CD8-positive, alpha-beta memory T cell (primary cell): ENCODE measurements at regions of chr10 and their contacts with region 1.

Region 1: GRCh38 chr10:103350501-103351260 is at the start of gene PCGF6:
- DNase-seq: peak; percentile 58 to 75 (median 66)
- H3K4me3 ChIP-seq: peak within 1 kb of the TSS; percentile 60
- H3K4me3 Mint-ChIP-seq: peak within 1 kb of the TSS; percentile 89 to 99 (median 92)
- H3K27ac ChIP-seq: peak within 1 kb of the TSS; percentile 64
- H3K27ac Mint-ChIP-seq: peak within 1 kb of the TSS; percentile 15 to 94 (median 88)
- H3K4me1 ChIP-seq: peaks cover 10% of the 10 kb centered on the region
- H3K4me1 Mint-ChIP-seq: peaks cover 8 to 22% (median 13%) of the 10 kb centered on the region in 3 donors
- H3K27me3 ChIP-seq: no peaks in the 10 kb centered on the region
- H3K27me3 Mint-ChIP-seq: no peaks in the 10 kb centered on the region
- total RNA-seq, gene PCGF6: 17.6 to 17.7 TPM

Region 2: GRCh38 chr10:102796407-102797176 is 554.1 kb before region 1 on chr10:
- CTCF ChIA-PET with region 1: no interaction called
- POLR2A ChIA-PET with region 1: no interaction called
- DNase-seq: peak in 4 of 5 donors; percentile 7 to 56 (median 20)
- H3K4me3 ChIP-seq: no peak overlapping the region
- H3K4me3 Mint-ChIP-seq: peak overlapping the region in 4 of 7 donors; percentile 8 to 48 (median 26)
- H3K27ac ChIP-seq: no peak overlapping the region
- H3K27ac Mint-ChIP-seq: peak overlapping the region in 7 of 8 donors; percentile 15 to 60 (median 29)
- H3K4me1 ChIP-seq: peaks cover 21% of the 10 kb centered on the region
- H3K4me1 Mint-ChIP-seq: peaks cover 38 to 64% (median 43%) of the 10 kb centered on the region in 3 donors
- H3K27me3 ChIP-seq: no peaks in the 10 kb centered on the region
- H3K27me3 Mint-ChIP-seq: no peaks in the 10 kb centered on the region

Region 3: DNA sequence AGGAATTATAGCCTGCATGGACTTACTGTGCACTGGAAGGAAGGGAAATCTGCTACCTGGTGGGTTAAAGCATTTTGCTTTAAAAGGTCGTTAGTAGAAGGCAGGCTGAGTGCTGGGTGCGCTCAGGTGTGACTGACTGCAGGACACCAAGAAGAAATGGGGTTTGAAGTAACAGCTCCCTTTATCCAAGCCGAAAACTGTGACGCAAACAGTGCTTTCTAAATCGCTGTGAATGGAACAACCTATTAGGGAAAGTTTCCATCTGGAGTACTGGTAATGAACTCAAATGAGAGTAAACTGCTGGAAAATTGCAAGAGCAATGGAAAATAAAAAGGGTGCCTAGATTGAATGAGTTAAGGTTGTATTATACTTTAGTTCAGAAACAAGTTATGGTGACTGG is 337.3 kb before region 1 on chr10:
- CTCF ChIA-PET with region 1: no interaction called
- POLR2A ChIA-PET with region 1: no interaction called
- DNase-seq: no peak
- H3K4me3 ChIP-seq: no peak overlapping the region
- H3K4me3 Mint-ChIP-seq: no peak overlapping the region
- H3K27ac ChIP-seq: no peak overlapping the region
- H3K27ac Mint-ChIP-seq: no peak overlapping the region
- H3K4me1 ChIP-seq: no peaks in the 10 kb centered on the region
- H3K4me1 Mint-ChIP-seq: peaks cover 0 to 5% (median 2%) of the 10 kb centered on the region in 3 donors
- H3K27me3 ChIP-seq: no peaks in the 10 kb centered on the region
- H3K27me3 Mint-ChIP-seq: no peaks in the 10 kb centered on the region

Region 4: DNA sequence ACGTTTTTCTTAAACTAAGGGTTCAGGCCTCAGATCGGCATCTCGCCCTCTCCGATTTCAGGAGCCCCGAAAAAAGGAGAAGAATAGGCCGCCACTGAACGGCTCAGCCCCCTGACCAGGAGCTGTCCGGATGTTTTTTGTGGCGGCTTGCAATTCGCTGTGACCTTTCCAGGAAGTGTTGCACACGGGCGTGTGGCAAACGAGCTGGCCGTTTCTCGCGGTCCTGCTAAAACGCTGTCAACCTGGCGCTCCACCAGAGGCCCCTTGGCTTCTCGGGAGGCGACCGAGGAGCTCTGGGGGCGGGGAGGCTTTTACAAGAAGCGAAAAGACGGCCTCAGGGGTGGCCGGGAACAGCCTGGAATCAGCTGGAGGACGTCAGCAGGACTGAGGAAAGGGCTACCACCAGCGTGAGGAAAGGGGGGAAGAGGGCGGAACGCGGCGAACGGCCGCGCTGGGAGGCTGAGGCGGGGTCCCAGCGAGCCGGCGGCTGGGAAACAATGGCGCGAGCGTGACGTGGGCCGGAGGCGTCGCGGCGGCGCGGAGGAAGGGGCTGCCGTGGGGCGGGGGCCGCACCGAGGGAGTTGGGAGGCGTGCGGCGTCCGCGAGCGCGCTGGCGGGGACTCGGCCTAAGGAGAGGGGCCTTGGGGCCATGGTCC is 158.1 kb before region 1 on chr10:
- CTCF ChIA-PET with region 1: no interaction called
- POLR2A ChIA-PET with region 1: no interaction called
- DNase-seq: peak; percentile 32 to 69 (median 49)
- H3K4me3 ChIP-seq: peak overlapping the region; percentile 97
- H3K4me3 Mint-ChIP-seq: peak overlapping the region; percentile 96 to 99 (median 98)
- H3K27ac ChIP-seq: peak overlapping the region; percentile 86
- H3K27ac Mint-ChIP-seq: peak overlapping the region; percentile 83 to 100 (median 95)
- H3K4me1 ChIP-seq: peaks cover 26% of the 10 kb centered on the region
- H3K4me1 Mint-ChIP-seq: peaks cover 37 to 52% (median 47%) of the 10 kb centered on the region in 3 donors
- H3K27me3 ChIP-seq: no peaks in the 10 kb centered on the region
- H3K27me3 Mint-ChIP-seq: no peaks in the 10 kb centered on the region

Region 5: GRCh38 chr10:103367782-103368518 is 17.3 kb after region 1 on chr10 and contains the start of gene TAF5:
- CTCF ChIA-PET with region 1: interaction called, 4 read pairs
- POLR2A ChIA-PET with region 1: interaction called, 21 read pairs
- DNase-seq: peak; percentile 79 to 93 (median 90)
- H3K4me3 ChIP-seq: peak within 1 kb of the TSS; percentile 70
- H3K4me3 Mint-ChIP-seq: peak within 1 kb of the TSS; percentile 91 to 99 (median 95)
- H3K27ac ChIP-seq: peak within 1 kb of the TSS; percentile 55
- H3K27ac Mint-ChIP-seq: peak within 1 kb of the TSS; percentile 77 to 96 (median 94)
- H3K4me1 ChIP-seq: peaks cover 14% of the 10 kb centered on the region
- H3K4me1 Mint-ChIP-seq: peaks cover 19 to 30% (median 28%) of the 10 kb centered on the region in 3 donors
- H3K27me3 ChIP-seq: no peaks in the 10 kb centered on the region
- H3K27me3 Mint-ChIP-seq: no peaks in the 10 kb centered on the region
- total RNA-seq, gene TAF5: 10.9 to 11.4 TPM

Region 6: GRCh38 chr10:103382769-103383168 is 32.1 kb after region 1 on chr10:
- CTCF ChIA-PET with region 1: no interaction called
- POLR2A ChIA-PET with region 1: no interaction called
- DNase-seq: no peak
- H3K4me3 ChIP-seq: no peak overlapping the region
- H3K4me3 Mint-ChIP-seq: no peak overlapping the region
- H3K27ac ChIP-seq: no peak overlapping the region
- H3K27ac Mint-ChIP-seq: peak overlapping the region in 2 of 8 donors; percentile 40 to 94
- H3K4me1 ChIP-seq: no peaks in the 10 kb centered on the region
- H3K4me1 Mint-ChIP-seq: no peaks in the 10 kb centered on the region
- H3K27me3 ChIP-seq: no peaks in the 10 kb centered on the region
- H3K27me3 Mint-ChIP-seq: no peaks in the 10 kb centered on the region